MCF 10A (cell line): ENCODE measurements at regions of chr9 and their contacts with region 1.

Region 1: DNA sequence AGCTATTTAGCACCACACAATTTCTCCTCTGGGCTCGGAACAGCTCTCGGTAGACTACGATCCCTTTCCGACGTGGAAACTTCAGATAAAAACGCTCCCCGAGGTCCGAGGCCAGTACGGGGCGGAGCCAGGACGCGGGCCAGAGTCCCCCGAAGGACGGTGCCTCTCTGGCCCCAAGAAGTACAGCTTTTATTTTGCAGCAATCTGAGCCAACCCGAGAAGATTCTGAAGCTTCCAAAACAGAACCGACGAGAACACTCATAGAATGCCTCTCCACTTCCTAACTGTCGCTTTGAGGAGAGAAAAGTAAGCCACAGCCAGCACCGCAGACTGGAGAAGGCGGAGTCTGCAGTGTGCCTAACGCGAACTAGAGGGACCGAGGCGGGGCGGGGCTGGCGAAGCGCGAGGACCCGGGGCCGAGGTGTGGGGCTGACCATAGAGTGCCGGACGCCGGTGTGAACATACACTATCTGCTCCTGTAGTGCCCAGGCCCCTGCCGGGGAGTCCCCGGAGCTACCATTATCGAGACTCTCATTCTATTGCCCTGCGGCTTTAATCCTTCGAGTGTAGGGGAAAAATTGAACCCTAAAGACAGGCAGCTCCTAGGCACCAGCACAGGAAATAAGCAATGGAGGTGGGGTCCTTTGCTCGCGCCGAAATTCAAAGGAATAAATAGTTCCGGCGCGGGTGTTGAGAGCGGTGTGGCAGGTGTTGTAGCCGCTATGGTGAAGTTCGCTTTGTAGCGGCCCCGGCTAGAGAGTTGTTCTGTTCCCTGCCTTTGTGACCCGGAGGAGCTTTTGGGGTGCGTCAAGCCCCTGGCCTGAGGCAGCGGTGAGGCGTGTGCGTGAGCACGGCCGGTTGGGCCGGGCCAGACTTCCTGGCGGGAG is at the start of gene SMC2:
- DNase-seq: peak; percentile 93
- H3K4me3 Mint-ChIP-seq: peak within 1 kb of the TSS; percentile 82
- H3K27ac Mint-ChIP-seq: peak within 1 kb of the TSS; percentile 99
- H3K4me1 Mint-ChIP-seq: peaks cover 31% of the 10 kb centered on the region
- H3K27me3 Mint-ChIP-seq: no peaks in the 10 kb centered on the region
- CTCF ChIP-seq: no peak
- total RNA-seq, gene SMC2: 13.7 and 23.1 TPM in 2 replicates

Region 2: GRCh38 chr9:103397868-103398600 is 695.9 kb before region 1 on chr9:
- CTCF ChIA-PET with region 1: interaction called, 3 read pairs
- POLR2A ChIA-PET with region 1: no interaction called
- intact Hi-C with region 1: loop called (anchors 5 kb)
- DNase-seq: peak; percentile 65
- H3K4me3 Mint-ChIP-seq: no peak overlapping the region
- H3K27ac Mint-ChIP-seq: no peak overlapping the region
- H3K4me1 Mint-ChIP-seq: peaks cover 6% of the 10 kb centered on the region
- H3K27me3 Mint-ChIP-seq: no peaks in the 10 kb centered on the region
- CTCF ChIP-seq: peak; percentile 76

Region 3: GRCh38 chr9:103804077-103804735 is 289.7 kb before region 1 on chr9:
- CTCF ChIA-PET with region 1: no interaction called
- POLR2A ChIA-PET with region 1: no interaction called
- intact Hi-C with region 1: loop called (anchors 5 kb)
- DNase-seq: peak; percentile 41
- H3K4me3 Mint-ChIP-seq: no peak overlapping the region
- H3K27ac Mint-ChIP-seq: no peak overlapping the region
- H3K4me1 Mint-ChIP-seq: peaks cover 14% of the 10 kb centered on the region
- H3K27me3 Mint-ChIP-seq: no peaks in the 10 kb centered on the region
- CTCF ChIP-seq: no peak

Region 4: DNA sequence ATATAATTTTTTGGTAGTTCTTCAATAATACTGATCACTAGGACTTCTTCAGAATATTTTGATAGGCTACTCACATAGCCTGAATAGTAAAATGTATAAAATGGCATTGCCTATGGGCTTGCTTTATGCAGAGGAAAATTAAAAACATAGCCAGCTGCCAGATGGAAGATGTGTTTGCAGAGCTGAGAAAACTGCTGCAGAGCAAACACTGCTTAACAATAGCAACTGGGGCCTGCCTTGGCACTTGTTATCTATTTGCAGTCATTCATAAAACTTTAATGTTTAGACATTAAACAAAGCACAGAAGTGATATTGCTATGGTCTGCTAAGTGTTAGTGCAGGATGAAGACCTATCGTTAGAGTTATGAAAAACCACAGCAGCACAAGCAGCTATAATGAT is 151.2 kb before region 1 on chr9:
- CTCF ChIA-PET with region 1: no interaction called
- POLR2A ChIA-PET with region 1: no interaction called
- intact Hi-C with region 1: no loop called
- DNase-seq: no peak
- H3K4me3 Mint-ChIP-seq: no peak overlapping the region
- H3K27ac Mint-ChIP-seq: no peak overlapping the region
- H3K4me1 Mint-ChIP-seq: no peaks in the 10 kb centered on the region
- H3K27me3 Mint-ChIP-seq: no peaks in the 10 kb centered on the region
- CTCF ChIP-seq: no peak

Region 5: GRCh38 chr9:104027295-104027694 is 66.6 kb before region 1 on chr9:
- CTCF ChIA-PET with region 1: no interaction called
- POLR2A ChIA-PET with region 1: interaction called, 3 read pairs
- intact Hi-C with region 1: loop called (anchors 10 kb)
- DNase-seq: no peak
- H3K4me3 Mint-ChIP-seq: peak overlapping the region; percentile 19
- H3K27ac Mint-ChIP-seq: peak overlapping the region; percentile 16
- H3K4me1 Mint-ChIP-seq: peaks cover 17% of the 10 kb centered on the region
- H3K27me3 Mint-ChIP-seq: no peaks in the 10 kb centered on the region
- CTCF ChIP-seq: no peak

Region 6: DNA sequence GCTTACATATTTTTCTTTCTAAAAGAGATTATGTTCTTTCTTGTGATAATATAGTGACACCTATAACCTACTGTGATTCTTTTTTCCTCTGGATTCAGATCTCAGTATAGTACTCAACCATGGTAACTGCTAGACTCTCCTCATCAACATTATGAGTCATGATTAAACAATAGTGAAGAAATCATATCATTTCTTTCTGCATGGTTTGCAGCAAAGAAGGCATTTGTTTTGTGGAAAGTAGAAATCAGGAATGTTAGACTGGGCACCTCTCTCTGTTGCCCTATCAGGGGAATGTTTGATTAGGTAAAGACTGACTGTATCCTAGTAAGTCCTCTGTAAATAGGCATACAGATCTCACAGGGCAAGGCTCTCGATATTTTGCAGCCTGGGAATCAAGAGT is 25.3 kb before region 1 on chr9:
- CTCF ChIA-PET with region 1: no interaction called
- POLR2A ChIA-PET with region 1: interaction called, 12 read pairs
- intact Hi-C with region 1: no loop called
- DNase-seq: peak; percentile 39
- H3K4me3 Mint-ChIP-seq: no peak overlapping the region
- H3K27ac Mint-ChIP-seq: no peak overlapping the region
- H3K4me1 Mint-ChIP-seq: peaks cover 11% of the 10 kb centered on the region
- H3K27me3 Mint-ChIP-seq: no peaks in the 10 kb centered on the region
- CTCF ChIP-seq: no peak

Region 7: DNA sequence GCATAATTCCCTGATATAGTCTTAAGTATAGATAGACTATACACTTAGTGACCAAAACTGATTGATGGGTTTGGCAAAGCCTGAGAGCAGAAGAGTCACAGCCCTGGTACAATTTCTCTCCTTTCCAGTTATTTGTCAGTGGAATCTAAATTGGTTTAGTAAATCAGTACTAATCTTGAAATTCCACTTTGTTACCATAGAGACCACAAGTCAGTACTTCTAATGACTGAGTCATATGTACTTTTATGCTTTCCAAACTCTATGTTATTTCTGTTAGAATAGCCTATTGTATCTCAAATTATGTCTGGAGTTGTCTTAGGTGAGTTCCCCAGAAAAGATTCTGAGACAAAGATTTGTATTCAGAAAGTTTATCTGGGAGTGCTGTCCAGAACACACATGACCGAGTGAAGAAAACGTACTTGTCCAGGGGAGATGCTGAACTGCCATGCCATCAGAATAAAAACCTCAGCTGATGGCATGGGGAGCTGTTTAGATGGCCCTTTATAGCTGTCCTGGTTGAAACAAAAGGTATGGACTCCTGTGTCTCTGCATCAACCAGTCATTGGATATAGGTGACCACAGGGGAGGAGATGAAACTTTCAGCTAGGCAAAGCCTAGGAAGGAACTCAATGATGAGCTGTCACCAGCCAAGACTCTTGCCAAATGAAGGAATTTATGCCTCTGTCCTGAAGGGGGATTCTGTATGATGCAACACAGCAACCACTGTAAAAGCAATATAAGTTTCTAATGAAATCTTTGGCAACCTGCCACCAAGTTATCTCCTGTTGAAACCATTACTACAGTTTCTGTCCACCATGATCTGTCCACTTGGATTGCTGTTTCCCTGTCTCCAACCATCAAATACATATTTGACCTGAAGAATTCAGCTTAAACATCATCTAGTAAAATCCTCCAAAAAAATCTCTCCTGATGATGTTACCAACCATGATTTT is 17.8 kb before region 1 on chr9:
- CTCF ChIA-PET with region 1: interaction called, 5 read pairs
- POLR2A ChIA-PET with region 1: interaction called, 45 read pairs
- intact Hi-C with region 1: no loop called
- DNase-seq: peak; percentile 75
- H3K4me3 Mint-ChIP-seq: peak overlapping the region; percentile 43
- H3K27ac Mint-ChIP-seq: peak overlapping the region; percentile 92
- H3K4me1 Mint-ChIP-seq: peaks cover 35% of the 10 kb centered on the region
- H3K27me3 Mint-ChIP-seq: no peaks in the 10 kb centered on the region
- CTCF ChIP-seq: no peak

Region 8: GRCh38 chr9:104527109-104527508 is 433.2 kb after region 1 on chr9 and contains the start of gene OR13C4:
- CTCF ChIA-PET with region 1: no interaction called
- POLR2A ChIA-PET with region 1: no interaction called
- intact Hi-C with region 1: no loop called
- DNase-seq: no peak
- H3K4me3 Mint-ChIP-seq: no peak within 1 kb of the TSS
- H3K27ac Mint-ChIP-seq: no peak within 1 kb of the TSS
- H3K4me1 Mint-ChIP-seq: no peaks in the 10 kb centered on the region
- H3K27me3 Mint-ChIP-seq: no peaks in the 10 kb centered on the region
- CTCF ChIP-seq: no peak
- total RNA-seq, gene OR13C4: not detected in 2 replicates